ENCODE measurements at regions of chr9 and their contacts with region 1.

Region 1: DNA sequence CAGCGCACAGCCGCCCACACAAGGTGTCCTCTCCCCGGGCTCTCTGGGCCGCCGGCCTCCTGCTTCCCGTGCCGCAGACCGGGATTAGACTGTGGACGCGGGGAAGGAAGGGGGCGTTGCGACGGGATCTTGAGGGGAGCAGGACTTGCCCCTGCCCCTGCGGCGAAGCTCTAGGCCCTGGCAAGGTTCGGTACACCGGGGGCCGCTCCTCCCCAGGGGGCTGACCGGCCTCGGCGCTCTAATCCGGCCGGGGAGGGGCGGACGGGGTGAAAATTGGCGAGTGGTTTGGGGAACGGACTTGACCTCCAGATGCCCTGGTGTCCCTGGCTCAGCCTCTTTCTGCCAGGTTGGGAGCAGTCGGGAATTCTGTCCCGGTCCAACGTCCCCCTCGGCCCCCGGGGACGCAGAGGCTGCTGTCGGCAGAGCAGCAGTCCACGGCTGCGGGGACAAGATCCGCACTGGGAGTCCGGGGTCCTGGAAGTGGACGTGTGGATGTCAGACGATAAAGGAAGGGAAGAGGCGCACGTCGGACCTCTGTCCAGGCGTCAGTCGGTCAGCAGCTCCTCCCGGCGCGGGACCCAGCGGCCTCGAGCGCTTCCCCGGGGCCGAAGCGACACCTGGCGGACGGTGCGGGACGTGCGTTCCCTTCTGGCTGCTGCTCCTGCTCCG is 1.9 kb upstream of the CNTFR start:
- DNase-seq: peak; percentile 84 to 87
- ATAC-seq: peak; percentile 37 to 42
- H3K4me3 ChIP-seq: peak overlapping the region; percentile 49 to 82 (median 68)
- H3K27ac ChIP-seq: peak overlapping the region; percentile 82 to 93 (median 86)
- H3K4me1 ChIP-seq: peaks cover 58 to 66% of the 10 kb centered on the region in 2 donors
- H3K27me3 ChIP-seq: no peaks in the 10 kb centered on the region
- CTCF ChIP-seq: peak; percentile 94 to 98 (median 97)
- POLR2A ChIP-seq: no peak

Region 2: DNA sequence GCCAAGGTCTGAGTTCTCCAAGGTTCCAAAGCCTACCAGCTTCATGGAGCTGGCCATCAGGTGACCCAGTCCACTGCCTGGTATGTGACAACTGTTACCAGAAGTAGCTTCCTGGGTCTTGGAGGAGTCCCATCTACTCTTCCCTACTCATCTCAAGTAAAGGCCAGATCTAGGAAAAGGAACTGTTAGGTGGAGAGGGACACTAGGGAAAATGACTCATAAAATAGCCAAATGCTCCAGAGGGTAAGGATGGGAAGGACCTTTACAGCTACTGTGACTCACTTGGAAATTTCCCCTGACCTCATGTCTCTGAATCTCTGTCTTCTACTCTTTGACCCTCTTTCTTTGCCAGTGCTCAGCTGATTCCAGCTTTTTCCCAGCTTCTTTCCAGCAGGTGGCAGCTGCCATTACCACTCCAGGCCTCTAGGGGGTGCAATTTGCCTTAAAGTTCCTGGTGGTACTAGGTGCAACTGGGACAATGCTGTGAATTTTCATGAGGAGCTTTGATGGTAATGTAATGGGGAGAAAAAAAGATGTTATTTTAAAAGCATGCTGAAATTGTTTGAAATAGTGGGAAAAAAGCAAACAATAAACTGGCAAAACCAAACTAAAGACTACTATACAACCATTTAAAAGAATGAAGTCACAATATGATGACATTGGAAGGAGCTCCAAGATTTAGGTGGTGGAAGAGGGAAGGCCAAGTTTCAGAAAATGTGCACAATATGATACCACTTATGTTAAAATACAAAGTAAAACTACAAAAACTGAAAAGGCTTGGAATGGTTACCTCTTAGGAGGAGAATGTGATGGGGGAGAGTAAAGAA is 187.6 kb before region 1 on chr9:
- in situ Hi-C with region 1: no loop called
- intact Hi-C with region 1: loop called (anchors 5 kb)
- DNase-seq: peak; percentile 42 to 68
- ATAC-seq: peak; percentile 70 to 79
- H3K4me3 ChIP-seq: no peak overlapping the region
- H3K27ac ChIP-seq: no peak overlapping the region
- H3K4me1 ChIP-seq: peaks cover 0 to 3% of the 10 kb centered on the region in 2 donors
- H3K27me3 ChIP-seq: no peaks in the 10 kb centered on the region
- CTCF ChIP-seq: peak; percentile 90 to 98 (median 95)
- POLR2A ChIP-seq: no peak

Region 3: DNA sequence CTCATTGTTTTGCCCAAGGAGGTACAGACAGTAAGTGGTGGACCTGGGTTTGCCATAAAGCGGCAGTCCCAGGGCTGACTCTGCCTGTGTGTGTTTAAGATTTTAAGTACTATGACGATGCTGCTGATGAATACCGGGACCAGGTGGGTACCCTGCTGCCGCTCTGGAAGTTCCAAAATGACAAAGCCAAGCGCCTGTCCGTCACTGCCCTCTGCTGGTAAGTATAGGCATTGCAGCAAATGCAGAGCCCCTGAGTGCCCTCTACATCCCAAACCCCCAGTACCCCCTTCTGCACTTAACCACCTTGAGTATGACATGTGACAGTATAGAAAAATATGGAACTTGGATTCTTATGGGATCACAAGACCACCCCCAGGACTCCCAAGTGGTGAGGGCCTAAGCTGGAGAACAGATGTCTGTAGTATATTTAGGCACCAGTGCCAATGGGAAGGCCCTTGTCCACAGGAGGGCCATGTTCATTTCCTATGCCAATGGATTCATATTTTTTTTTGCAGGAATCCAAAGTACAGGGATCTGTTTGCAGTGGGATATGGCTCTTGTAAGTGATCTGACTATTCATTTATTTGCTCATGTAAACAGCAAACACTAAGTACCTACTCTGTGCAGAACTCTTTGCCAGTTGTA is 90.6 kb before region 1 on chr9:
- in situ Hi-C with region 1: no loop called
- intact Hi-C with region 1: loop called (anchors 2 kb)
- DNase-seq: peak; percentile 27 to 53
- ATAC-seq: peak; percentile 61 to 82
- H3K4me3 ChIP-seq: no peak overlapping the region
- H3K27ac ChIP-seq: no peak overlapping the region
- H3K4me1 ChIP-seq: no peaks in the 10 kb centered on the region
- H3K27me3 ChIP-seq: no peaks in the 10 kb centered on the region
- CTCF ChIP-seq: peak; percentile 90 to 98 (median 97)
- POLR2A ChIP-seq: no peak

Region 4: GRCh38 chr9:34547960-34548611 is 43.3 kb before region 1 on chr9:
- in situ Hi-C with region 1: loop called in 1 of 4 experiments (anchors 5 kb)
- intact Hi-C with region 1: loop called (anchors 1 kb)
- DNase-seq: peak; percentile 52 to 74
- ATAC-seq: peak; percentile 59 to 76
- H3K4me3 ChIP-seq: no peak overlapping the region
- H3K27ac ChIP-seq: peak overlapping the region in 1 of 4 donors; percentile 39
- H3K4me1 ChIP-seq: peaks cover 0 to 6% of the 10 kb centered on the region in 2 donors
- H3K27me3 ChIP-seq: no peaks in the 10 kb centered on the region
- CTCF ChIP-seq: peak; percentile 83 to 96 (median 92)
- POLR2A ChIP-seq: no peak

Region 5: GRCh38 chr9:34559624-34560452 is 31.5 kb before region 1 on chr9:
- in situ Hi-C with region 1: loop called in 1 of 4 experiments (anchors 5 kb)
- intact Hi-C with region 1: loop called (anchors 1 kb)
- DNase-seq: peak; percentile 59 to 92
- ATAC-seq: peak; percentile 62 to 66
- H3K4me3 ChIP-seq: peak overlapping the region in 3 of 4 donors; percentile 14 to 33 (median 31)
- H3K27ac ChIP-seq: peak overlapping the region; percentile 92 to 97 (median 93)
- H3K4me1 ChIP-seq: peaks cover 48 to 67% of the 10 kb centered on the region in 2 donors
- H3K27me3 ChIP-seq: no peaks in the 10 kb centered on the region
- CTCF ChIP-seq: no peak
- POLR2A ChIP-seq: no peak

Measured in gastrocnemius medialis (tissue), 4 donors.